ENCODE measurements at regions of chr2 and their contacts with region 1.

Region 1: DNA sequence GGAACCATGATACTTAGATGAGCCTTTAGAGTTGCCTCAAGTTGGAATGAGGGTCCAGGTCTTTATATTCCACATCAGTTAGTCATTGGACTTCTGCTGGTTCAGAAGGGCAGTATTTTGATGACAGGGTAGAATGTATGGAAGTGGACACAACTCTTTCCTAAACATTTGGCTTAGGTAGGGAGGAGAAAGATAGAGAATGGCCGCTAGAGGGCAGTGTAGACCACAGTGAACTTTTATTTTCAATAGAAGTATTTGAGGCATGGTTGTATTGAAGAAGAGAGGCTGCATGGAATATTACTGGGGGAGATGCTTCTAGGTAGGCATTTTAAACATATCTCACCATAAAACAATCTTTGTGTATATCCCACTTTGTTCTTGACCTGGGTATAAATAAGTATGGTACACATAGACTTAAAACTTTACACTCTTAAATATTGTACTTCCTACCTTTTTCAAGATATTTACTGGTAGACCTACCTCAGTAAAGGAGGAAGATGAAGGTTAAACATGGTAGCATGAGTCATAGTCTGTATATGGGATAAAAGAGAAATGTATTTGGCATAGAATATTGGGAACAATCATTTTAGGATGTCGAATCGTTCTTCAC is 497.6 kb upstream of the FAM98A start:
- DNase-seq: peak; percentile 59
- H3K4me3 ChIP-seq: no peak overlapping the region
- H3K27ac ChIP-seq: no peak overlapping the region
- H3K4me1 ChIP-seq: no peaks in the 10 kb centered on the region
- H3K27me3 ChIP-seq: no peaks in the 10 kb centered on the region
- CTCF ChIP-seq: peak; percentile 65

Region 2: DNA sequence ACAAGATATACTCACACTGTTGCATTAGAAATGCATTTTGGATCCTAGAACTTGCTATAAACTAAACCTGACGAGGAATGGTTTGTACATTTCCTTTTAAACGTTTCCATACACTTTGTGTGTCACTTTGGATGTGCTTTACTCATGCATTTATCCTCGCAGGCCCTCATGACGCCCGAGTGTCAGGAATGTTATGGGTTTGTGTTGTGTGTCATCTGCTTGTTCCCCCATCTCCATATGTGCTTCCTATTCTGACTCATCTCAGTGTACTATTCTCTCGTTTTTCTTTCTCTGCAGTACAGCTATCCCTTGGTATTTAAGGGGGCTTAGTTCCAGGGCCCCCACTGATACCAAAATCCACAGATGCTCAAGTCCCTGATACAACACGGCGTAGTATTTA is 741.7 kb before region 1 on chr2:
- intact Hi-C with region 1: no loop called
- DNase-seq: no peak
- H3K4me3 ChIP-seq: no peak overlapping the region
- H3K27ac ChIP-seq: no peak overlapping the region
- H3K4me1 ChIP-seq: no peaks in the 10 kb centered on the region
- H3K27me3 ChIP-seq: no peaks in the 10 kb centered on the region
- CTCF ChIP-seq: no peak

Region 3: GRCh38 chr2:34161549-34161948 is 64.9 kb after region 1 on chr2:
- intact Hi-C with region 1: no loop called
- DNase-seq: no peak
- H3K4me3 ChIP-seq: no peak overlapping the region
- H3K27ac ChIP-seq: no peak overlapping the region
- H3K4me1 ChIP-seq: no peaks in the 10 kb centered on the region
- H3K27me3 ChIP-seq: no peaks in the 10 kb centered on the region
- CTCF ChIP-seq: no peak

Region 4: GRCh38 chr2:34570266-34570872 is 473.7 kb after region 1 on chr2:
- intact Hi-C with region 1: loop called (anchors 5 kb)
- DNase-seq: no peak
- H3K4me3 ChIP-seq: no peak overlapping the region
- H3K27ac ChIP-seq: no peak overlapping the region
- H3K4me1 ChIP-seq: no peaks in the 10 kb centered on the region
- H3K27me3 ChIP-seq: no peaks in the 10 kb centered on the region
- CTCF ChIP-seq: peak; percentile 38

Region 5: DNA sequence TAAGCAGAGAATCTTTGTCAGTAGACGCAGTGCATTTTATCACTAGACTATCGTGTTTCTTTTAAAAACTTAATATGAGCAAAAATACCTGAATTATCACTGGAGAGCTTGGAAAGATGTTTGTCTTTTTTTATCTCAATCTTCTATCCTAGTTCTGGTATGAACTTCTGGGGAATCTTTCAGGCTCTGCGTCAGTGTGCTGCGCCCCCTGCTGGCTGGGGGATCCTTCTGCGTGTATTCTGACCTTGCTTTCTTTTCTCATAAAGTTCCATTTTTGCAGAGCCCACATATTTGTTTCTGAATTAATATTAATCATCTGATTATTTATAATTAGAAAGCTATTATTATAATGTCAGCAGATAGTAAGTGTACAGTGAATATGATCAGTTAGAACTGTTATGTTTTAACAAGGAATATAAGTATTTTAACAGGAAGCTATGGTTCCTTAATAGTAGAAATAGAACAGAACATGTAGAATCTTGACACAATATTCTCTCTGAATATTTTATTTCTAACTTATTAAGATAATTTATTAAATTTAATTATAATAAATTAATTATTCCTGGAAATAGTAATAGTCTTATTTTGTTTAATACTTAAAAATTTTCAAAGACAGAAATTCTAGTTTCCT is 1313.9 kb after region 1 on chr2:
- intact Hi-C with region 1: loop called (anchors 5 kb)
- DNase-seq: peak; percentile 46
- H3K4me3 ChIP-seq: no peak overlapping the region
- H3K27ac ChIP-seq: no peak overlapping the region
- H3K4me1 ChIP-seq: no peaks in the 10 kb centered on the region
- H3K27me3 ChIP-seq: no peaks in the 10 kb centered on the region
- CTCF ChIP-seq: peak; percentile 88